Heart right ventricle (tissue), 16 donors: ENCODE measurements at regions of chr9 and their contacts with region 1.

Region 1: GRCh38 chr9:22147813-22148524 is 138.9 kb upstream of the CDKN2B start:
- DNase-seq: no peak
- ATAC-seq: peak in 3 of 8 donors; percentile 55 to 77 (median 73)
- H3K4me3 ChIP-seq: no peak overlapping the region
- H3K27ac ChIP-seq: peak overlapping the region in 1 of 10 donors; percentile 12
- H3K4me1 ChIP-seq: peaks cover 0 to 37% (median 0%) of the 10 kb centered on the region in 9 donors
- H3K27me3 ChIP-seq: no peaks in the 10 kb centered on the region
- CTCF ChIP-seq: no peak

Region 2: GRCh38 chr9:22198681-22199080 is 50.7 kb after region 1 on chr9:
- intact Hi-C with region 1: loop called in 1 of 10 experiments (anchors 10 kb)
- DNase-seq: no peak
- ATAC-seq: no peak
- H3K4me3 ChIP-seq: no peak overlapping the region
- H3K27ac ChIP-seq: no peak overlapping the region
- H3K4me1 ChIP-seq: peaks cover 0 to 5% (median 0%) of the 10 kb centered on the region in 9 donors
- H3K27me3 ChIP-seq: peaks cover 0 to 4% (median 0%) of the 10 kb centered on the region in 7 donors
- CTCF ChIP-seq: no peak